GM10248 (cell line): ENCODE measurements at regions of chr1 and their contacts with region 1.

Region 1: GRCh38 chr1:92994105-92994712 is 32.9 kb upstream of the DIPK1A start:
- DNase-seq: peak; percentile 65
- CTCF ChIP-seq: peak; percentile 77

Region 2: GRCh38 chr1:92843429-92844352 is 150.5 kb before region 1 on chr1:
- CTCF ChIA-PET with region 1: interaction called, 16 read pairs
- POLR2A ChIA-PET with region 1: interaction called, 3 read pairs
- DNase-seq: no peak
- CTCF ChIP-seq: no peak

Region 3: DNA sequence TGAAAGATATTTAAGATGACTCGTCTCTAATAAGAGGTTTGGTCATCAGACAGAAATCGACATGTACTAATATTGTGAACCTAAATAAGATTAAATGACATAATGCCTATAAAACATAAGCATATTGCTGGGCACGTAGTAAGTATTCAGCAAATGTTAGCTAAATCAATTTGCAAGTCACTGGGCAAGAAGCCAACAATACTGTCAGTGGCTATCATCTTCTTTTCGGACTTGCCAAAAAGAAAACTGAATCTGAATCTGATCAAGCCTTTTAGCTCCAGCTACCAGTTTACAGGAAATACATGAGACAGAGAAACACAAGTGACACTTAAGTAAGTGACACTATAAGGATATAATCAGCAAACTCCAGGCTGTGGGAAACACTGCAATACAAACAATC is 116.4 kb before region 1 on chr1:
- CTCF ChIA-PET with region 1: interaction called, 17 read pairs
- POLR2A ChIA-PET with region 1: no interaction called
- DNase-seq: peak; percentile 26
- CTCF ChIP-seq: no peak

Region 4: GRCh38 chr1:92929461-92929860 is 64.7 kb before region 1 on chr1:
- CTCF ChIA-PET with region 1: interaction called, 11 read pairs
- POLR2A ChIA-PET with region 1: no interaction called
- DNase-seq: peak; percentile 18
- CTCF ChIP-seq: no peak

Region 5: DNA sequence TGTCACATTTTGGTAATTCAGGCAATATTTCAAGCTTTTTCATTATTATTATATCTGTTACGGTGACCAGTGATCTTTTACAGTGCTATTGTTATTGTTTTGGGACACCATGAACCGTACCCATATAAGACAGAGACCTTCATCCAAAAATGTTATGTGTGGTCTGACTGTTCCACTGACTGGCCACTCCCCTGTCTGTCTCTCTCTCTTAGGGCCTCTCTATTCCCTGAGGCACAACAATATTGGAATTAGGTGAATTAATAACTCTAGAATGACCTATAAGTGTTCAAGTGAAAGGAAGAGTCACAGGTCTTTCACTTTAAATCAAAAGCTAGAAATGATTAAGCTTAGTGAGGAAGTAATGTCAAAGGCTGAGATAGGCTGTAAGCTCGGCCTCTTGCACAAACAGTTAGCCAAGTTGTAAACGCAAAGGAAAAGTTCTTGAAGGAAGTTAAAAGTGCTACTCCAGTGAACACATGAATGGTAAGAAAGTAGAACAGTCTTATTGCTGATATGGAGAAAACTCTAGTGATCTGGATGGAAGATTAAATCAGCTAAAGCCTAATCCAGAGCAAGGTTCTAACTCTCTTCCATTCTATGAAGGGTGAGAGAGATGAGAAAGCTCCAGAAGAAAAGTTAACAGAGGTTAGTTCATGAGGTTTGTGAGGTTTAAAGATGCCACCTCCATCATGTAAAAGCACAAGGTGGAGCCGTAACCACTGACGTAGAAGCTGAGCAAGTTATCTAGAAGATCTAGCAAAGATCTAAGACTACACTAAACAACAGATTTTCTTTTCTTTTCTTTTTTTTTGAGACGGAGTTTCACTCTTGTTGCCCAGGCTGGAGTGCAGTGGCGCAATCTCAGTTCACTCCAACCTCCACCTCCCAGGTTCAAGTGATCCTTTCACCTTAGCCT is 13.2 kb before region 1 on chr1:
- CTCF ChIA-PET with region 1: interaction called, 282 read pairs
- POLR2A ChIA-PET with region 1: no interaction called
- DNase-seq: no peak
- CTCF ChIP-seq: no peak

Region 6: DNA sequence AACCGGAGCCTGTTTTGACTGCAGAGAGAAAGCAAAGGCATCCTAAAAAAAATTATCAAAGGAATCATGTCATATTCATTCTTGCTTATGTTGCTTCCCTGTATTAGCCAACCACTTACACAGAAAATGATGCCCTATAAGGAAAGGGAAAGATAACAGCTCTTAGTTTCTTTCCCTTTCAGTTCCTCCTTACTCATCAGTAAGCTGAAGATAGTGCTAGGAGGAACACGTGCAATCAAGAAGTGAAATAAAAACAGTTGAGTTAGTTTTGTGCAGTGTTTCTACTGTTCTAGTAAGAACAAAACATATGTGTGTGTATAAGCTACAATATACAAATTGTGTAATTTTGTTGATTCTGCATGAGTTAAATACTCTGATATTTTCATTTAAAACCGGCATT is 39.6 kb after region 1 on chr1:
- CTCF ChIA-PET with region 1: interaction called, 12 read pairs
- POLR2A ChIA-PET with region 1: no interaction called
- DNase-seq: peak; percentile 70
- CTCF ChIP-seq: no peak

Region 7: DNA sequence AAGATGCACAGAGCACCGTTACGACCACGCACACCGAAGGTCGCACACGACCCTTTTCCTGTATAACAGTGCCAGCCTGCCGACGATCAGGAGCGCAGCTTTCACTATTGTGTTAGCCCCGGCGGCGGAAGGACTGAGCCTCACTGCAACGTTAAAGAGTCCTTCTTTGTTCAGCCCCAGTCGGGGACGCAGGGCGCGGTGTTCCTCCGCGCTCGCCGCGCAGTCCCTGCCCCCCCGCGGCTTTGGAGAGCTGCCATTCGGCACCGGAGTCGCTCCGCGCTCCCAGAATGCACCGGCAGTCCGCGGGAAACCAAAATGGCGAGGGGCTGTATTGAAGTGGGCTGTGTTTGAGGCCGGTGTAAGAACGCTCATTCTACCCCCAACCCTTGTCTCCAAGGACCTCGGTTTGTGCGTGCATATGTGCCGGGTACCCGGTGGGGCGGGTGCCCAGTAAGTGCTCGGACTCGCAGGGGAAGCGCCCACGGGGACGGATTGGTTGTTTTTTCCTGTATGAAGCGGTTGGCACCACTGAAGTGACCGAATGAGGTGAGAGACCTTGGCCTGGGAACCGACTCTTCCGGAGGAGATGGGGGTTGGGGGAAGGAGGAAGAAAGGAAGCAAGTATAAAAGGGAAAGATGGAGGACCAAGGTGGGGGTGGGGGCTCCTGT is 84.9 kb after region 1 on chr1 and contains the start of gene MTF2:
- CTCF ChIA-PET with region 1: no interaction called
- POLR2A ChIA-PET with region 1: no interaction called
- DNase-seq: peak; percentile 91
- CTCF ChIP-seq: no peak

Region 8: DNA sequence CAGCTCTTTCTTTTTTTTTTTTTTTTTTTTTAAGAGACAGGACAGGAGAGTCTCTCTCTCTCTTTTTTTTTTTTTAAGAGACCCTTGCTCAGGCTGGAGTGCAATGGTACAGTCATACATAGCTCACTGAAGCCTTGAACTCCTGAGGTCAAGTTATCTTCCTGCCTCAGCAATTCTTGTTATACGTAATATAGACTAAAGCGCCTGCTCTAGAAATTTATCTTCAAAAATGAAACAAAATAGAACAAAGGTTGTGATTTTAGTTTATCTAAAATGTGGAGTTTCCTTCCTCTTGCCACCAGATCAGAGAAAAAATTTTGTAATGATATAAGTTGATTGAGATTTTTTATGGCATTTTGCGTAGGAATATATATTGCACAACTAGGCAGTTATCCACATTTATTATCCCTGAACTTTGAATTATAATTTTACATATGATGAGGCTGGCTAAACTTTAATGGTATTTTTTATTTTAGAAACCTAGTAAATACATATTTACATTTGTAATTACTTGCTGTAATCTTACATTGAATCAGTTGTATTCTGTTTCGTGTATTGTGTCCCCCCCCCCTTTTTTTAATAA is 129.1 kb after region 1 on chr1:
- CTCF ChIA-PET with region 1: no interaction called
- POLR2A ChIA-PET with region 1: no interaction called
- DNase-seq: no peak
- CTCF ChIP-seq: no peak